Tibial artery (tissue), 4 donors: ENCODE measurements at regions of chr5 and their contacts with region 1.

Region 1: DNA sequence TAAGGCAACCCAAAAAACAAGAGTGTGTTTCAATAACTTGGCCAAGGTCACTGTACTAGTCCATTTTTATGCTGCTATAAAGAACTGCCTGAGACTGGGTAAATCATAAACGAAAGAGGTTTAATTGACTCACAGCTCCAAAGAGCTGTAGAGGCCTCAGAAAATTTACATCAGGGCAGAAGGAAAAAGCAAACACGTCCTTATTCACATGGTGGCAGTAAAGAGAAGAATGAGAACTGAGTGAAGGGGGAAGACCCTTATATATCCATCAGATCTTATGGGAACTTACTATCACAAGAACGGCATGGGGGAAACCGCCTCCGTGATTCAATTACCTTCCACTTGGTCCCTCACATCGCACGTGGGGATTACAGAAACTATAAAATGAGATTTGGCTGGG is 64.3 kb upstream of the CAMK4 start:
- DNase-seq: no peak
- H3K4me3 ChIP-seq: no peak overlapping the region
- H3K27ac ChIP-seq: no peak overlapping the region
- H3K4me1 ChIP-seq: no peaks in the 10 kb centered on the region
- H3K27me3 ChIP-seq: no peaks in the 10 kb centered on the region
- CTCF ChIP-seq: no peak

Region 2: GRCh38 chr5:111278845-111279504 is 119.1 kb after region 1 on chr5:
- intact Hi-C with region 1: loop called (anchors 10 kb)
- DNase-seq: peak; percentile 38 to 67
- H3K4me3 ChIP-seq: no peak overlapping the region
- H3K27ac ChIP-seq: no peak overlapping the region
- H3K4me1 ChIP-seq: no peaks in the 10 kb centered on the region
- H3K27me3 ChIP-seq: no peaks in the 10 kb centered on the region
- CTCF ChIP-seq: peak; percentile 33 to 49

Region 3: DNA sequence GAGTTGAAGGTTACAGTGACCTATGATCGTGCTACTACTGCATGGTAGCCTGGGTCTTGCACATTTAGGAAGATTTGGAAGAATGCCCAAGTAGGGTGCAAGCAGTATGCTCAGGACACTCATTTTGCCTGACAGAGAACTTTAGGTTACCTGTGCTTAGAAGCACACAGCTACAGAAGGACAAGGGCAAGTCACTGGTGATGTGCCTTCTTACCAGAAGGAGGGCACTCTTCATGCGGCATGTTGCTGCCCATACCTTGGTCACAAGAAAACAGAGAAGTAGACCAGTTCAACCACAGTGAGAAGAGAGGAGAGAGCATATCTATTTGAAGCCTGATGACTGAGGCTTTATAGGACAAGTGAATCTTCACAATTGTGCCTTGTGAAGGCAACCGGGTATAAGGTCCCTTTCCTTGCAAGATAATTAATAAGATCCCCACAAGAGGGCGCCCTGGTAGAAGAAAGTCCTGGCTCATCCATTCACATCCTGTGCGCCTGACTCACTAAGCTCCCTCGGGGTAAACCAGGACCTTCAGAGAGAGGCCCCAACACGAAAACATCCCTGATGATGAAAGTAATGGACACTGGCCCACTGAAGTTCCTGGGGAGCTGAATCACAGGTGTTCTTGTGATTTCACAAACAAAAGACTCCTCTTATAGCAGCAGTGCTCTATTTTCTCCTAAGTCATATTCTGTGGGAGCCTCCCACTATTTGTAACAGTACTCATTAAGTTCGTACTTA is 390.6 kb after region 1 on chr5:
- intact Hi-C with region 1: loop called (anchors 5 kb)
- DNase-seq: peak; percentile 87
- H3K4me3 ChIP-seq: no peak overlapping the region
- H3K27ac ChIP-seq: no peak overlapping the region
- H3K4me1 ChIP-seq: peaks cover 0 to 13% (median 4%) of the 10 kb centered on the region in 4 donors
- H3K27me3 ChIP-seq: no peaks in the 10 kb centered on the region
- CTCF ChIP-seq: peak; percentile 53 to 83

Region 4: DNA sequence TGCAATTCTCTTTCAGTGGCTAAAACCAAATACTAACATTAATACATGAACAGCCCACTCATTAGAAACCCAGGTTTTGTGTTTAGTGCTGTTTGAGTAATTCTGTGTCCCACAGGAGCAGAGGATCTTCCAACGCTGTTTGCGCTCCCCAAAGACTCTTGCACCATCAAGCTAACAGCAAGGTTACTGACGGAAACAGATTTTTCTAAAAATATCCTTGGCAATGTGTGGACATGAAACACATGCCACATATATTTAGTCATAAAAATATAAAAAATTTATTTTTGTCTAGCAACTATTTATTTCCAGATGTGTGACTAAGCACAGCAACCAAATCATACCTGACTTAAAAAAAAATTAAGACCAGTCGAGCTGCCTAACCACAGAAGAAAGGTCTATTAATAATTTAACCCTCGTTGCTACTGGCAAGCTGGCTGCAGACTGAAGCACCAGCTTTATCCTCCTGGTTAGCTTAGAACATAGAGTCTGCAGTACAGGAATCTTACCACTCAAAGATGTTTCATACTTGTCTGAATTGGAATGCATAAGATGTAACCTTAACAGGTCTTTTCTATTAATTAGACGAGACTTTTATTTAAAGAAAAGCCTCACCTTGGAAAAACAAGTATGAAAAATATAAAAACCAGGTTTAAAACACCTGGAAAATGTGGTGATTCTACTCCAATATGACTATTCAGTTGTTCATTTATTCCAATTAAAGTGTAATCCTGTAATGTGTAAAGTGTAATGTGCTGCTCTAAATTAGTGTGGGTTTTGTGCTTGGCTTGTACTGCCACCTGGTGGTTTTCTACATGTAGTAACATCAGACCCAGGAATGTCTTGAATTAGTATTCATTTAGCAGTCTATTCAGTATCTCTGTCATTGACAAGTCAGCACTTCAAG is 986.7 kb after region 1 on chr5:
- intact Hi-C with region 1: loop called (anchors 10 kb)
- DNase-seq: peak; percentile 56 to 72
- H3K4me3 ChIP-seq: no peak overlapping the region
- H3K27ac ChIP-seq: peak overlapping the region; percentile 42 to 43
- H3K4me1 ChIP-seq: peaks cover 0 to 20% (median 7%) of the 10 kb centered on the region in 4 donors
- H3K27me3 ChIP-seq: no peaks in the 10 kb centered on the region
- CTCF ChIP-seq: peak; percentile 83 to 96